ENCODE measurements at regions of chr11 and their contacts with region 1.

Region 1: GRCh38 chr11:355581-356458 is 13.5 kb upstream of the B4GALNT4 start:
- DNase-seq: peak; percentile 97 to 99 (median 97)
- ATAC-seq: peak; percentile 71 to 84 (median 78)
- H3K4me3 ChIP-seq: peak overlapping the region; percentile 29 to 46 (median 34)
- H3K27ac ChIP-seq: peak overlapping the region; percentile 99 to 100 (median 100)
- H3K4me1 ChIP-seq: peaks cover 3 to 34% (median 14%) of the 10 kb centered on the region in 4 donors
- H3K27me3 ChIP-seq: no peaks in the 10 kb centered on the region
- CTCF ChIP-seq: no peak
- POLR2A ChIP-seq: peak; percentile 90

Region 2: GRCh38 chr11:210122-210428 is 145.7 kb before region 1 on chr11:
- intact Hi-C with region 1: loop called in 1 of 2 experiments (anchors 5 kb)
- DNase-seq: peak in 1 of 3 donors; percentile 41
- ATAC-seq: no peak
- H3K4me3 ChIP-seq: no peak overlapping the region
- H3K27ac ChIP-seq: no peak overlapping the region
- H3K4me1 ChIP-seq: peaks cover 0 to 23% (median 13%) of the 10 kb centered on the region in 4 donors
- H3K27me3 ChIP-seq: no peaks in the 10 kb centered on the region
- CTCF ChIP-seq: no peak
- POLR2A ChIP-seq: no peak

Region 3: DNA sequence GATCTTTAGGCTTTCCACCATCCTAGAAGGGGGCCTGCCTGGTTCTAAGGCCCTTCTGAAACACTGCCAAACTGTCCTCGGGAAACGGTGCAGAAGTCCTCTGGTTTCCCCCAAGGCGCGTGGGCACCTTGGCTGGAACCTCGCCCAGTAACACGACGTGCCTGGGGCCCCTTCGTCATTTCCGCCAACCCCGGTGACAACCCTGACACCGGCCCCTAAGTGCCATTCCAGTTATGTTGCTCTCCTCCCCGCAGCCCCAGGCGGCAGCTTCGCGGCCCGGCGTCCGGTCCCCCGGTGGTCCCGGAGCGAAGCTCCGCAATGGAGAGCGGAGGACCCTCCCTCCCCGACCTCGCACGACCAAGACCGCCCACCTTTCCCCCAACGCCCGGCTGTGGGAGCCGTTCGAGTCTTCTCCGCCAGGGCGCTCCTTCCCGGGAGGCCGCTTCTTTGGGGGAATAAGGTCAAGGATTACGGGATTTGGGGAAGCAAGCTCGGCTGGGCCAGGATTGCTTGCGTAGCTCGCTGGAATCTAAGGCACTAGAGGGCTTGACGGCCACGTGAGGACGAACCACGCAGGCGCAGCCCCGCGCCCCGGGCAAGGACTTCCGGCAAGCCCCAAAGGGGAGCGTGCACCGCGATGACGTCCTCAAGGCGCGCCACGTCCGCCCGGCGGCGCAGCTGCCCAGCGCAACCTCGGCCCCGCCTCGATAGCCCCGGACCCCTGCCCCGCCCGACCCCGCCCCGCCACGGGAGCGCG is 150.6 kb after region 1 on chr11:
- intact Hi-C with region 1: no loop called
- DNase-seq: peak; percentile 99
- ATAC-seq: peak; percentile 80 to 87 (median 84)
- H3K4me3 ChIP-seq: peak overlapping the region; percentile 85 to 100 (median 88)
- H3K27ac ChIP-seq: peak overlapping the region; percentile 96 to 100 (median 98)
- H3K4me1 ChIP-seq: peaks cover 0 to 21% (median 8%) of the 10 kb centered on the region in 4 donors
- H3K27me3 ChIP-seq: no peaks in the 10 kb centered on the region
- CTCF ChIP-seq: peak in 1 of 4 donors; percentile 17
- POLR2A ChIP-seq: peak; percentile 90

Measured in right lobe of liver (tissue), 6 donors.